Activated B cell treated with CpG ODN at 0.5 μM for 24 hours (primary cell): ENCODE measurements at regions of chr14 and their contacts with region 1.

Region 1: GRCh38 chr14:79649856-79650255 is 561.4 kb downstream of the DIO2 start:
- DNase-seq: no peak
- ATAC-seq: no peak
- H3K4me3 Mint-ChIP-seq: no peak overlapping the region
- H3K27ac Mint-ChIP-seq: no peak overlapping the region
- H3K4me1 Mint-ChIP-seq: no peaks in the 10 kb centered on the region
- H3K27me3 Mint-ChIP-seq: no peaks in the 10 kb centered on the region
- CTCF ChIP-seq: no peak

Region 2: GRCh38 chr14:79638672-79639266 is 11.1 kb before region 1 on chr14:
- CTCF ChIA-PET with region 1: no interaction called
- POLR2A ChIA-PET with region 1: no interaction called
- intact Hi-C with region 1: loop called (anchors 1 kb)
- DNase-seq: no peak
- ATAC-seq: no peak
- H3K4me3 Mint-ChIP-seq: no peak overlapping the region
- H3K27ac Mint-ChIP-seq: no peak overlapping the region
- H3K4me1 Mint-ChIP-seq: no peaks in the 10 kb centered on the region
- H3K27me3 Mint-ChIP-seq: no peaks in the 10 kb centered on the region
- CTCF ChIP-seq: no peak

Region 3: DNA sequence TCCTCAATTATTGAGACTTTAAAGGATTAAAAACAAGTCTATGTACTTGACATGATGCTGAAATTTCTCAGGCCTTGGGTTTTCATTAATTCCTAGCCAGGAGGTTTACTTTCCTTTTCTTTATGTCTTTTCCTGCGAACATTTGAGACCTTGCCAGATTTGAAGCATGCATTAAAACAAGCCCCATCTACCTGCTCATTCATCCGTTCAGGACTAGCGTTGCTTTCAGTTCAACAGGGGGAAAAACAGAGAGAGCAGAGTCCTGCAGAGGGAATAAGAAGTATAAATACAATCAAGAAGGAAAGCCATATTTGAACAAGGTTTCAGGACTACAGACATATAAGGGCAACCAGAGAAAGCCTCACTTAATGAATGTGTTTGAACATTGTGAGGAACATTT is 19.1 kb after region 1 on chr14:
- CTCF ChIA-PET with region 1: no interaction called
- POLR2A ChIA-PET with region 1: no interaction called
- intact Hi-C with region 1: no loop called
- DNase-seq: no peak
- ATAC-seq: no peak
- H3K4me3 Mint-ChIP-seq: no peak overlapping the region
- H3K27ac Mint-ChIP-seq: no peak overlapping the region
- H3K4me1 Mint-ChIP-seq: no peaks in the 10 kb centered on the region
- H3K27me3 Mint-ChIP-seq: no peaks in the 10 kb centered on the region
- CTCF ChIP-seq: no peak

Region 4: DNA sequence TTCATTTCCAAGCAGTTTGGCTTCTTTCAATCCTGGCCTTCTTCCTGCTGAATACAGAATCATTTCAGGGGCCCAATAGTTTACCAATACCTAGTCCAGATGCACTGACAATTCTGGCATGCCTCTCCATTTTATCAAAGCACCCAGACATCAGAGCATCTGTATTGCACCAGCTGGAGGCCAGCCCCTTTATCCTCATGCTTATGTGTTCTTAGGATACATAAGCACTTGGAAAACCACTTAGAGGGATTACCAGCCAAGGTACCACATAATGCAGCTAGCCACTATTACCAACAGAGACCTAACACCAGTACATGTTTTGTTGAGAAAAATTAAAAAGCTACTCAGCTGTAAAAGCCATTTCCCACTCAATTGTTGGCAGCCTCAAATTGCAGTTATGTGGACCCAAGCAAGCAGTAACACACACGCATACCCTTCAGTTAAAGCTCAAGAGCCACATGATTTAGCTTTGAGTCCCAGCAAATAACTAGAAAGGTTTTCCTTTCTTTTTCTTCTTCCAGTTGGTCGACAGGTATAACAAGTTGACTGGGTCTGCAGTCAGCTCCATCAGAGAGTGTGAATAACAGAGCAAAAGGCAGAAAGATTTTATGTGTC is 297.7 kb after region 1 on chr14:
- CTCF ChIA-PET with region 1: no interaction called
- POLR2A ChIA-PET with region 1: no interaction called
- intact Hi-C with region 1: no loop called
- DNase-seq: no peak
- ATAC-seq: no peak
- H3K4me3 Mint-ChIP-seq: no peak overlapping the region
- H3K27ac Mint-ChIP-seq: no peak overlapping the region
- H3K4me1 Mint-ChIP-seq: no peaks in the 10 kb centered on the region
- H3K27me3 Mint-ChIP-seq: no peaks in the 10 kb centered on the region
- CTCF ChIP-seq: no peak